ENCODE measurements at regions of chr15 and their contacts with region 1.

Region 1: DNA sequence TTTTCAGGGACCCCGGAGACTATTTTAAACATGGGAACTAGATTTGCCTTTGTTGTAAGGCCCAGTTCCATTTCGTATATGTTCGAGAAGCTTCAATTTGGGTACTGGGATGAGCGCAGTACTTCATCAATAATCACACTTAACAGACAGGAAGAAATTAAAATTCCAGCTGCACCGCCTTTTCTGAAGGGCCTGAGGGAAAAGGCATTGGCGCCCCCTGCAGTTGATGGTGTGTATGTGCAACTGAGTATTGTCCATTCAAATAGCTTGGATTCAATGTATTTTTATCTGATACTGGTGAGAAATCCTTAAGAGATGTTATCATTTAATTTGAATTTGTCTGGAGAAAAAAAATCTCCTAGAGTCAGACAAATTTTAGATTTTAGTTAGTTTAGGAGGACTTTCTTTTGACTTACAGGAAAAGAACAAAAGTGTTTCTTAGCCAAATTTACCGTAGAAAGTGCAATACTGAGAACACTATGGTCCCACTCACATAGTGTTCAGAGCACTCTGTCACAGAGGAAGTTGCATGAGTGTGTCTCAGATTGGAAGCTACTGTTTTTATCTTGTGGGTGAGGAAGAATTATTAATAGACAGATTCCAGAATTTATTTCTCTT is 5.4 kb upstream of the ALDH1A2 start:
- DNase-seq: no peak
- H3K4me3 ChIP-seq: no peak overlapping the region
- H3K27me3 ChIP-seq: peaks cover 2% of the 10 kb centered on the region
- CTCF ChIP-seq: peak; percentile 91

Region 2: DNA sequence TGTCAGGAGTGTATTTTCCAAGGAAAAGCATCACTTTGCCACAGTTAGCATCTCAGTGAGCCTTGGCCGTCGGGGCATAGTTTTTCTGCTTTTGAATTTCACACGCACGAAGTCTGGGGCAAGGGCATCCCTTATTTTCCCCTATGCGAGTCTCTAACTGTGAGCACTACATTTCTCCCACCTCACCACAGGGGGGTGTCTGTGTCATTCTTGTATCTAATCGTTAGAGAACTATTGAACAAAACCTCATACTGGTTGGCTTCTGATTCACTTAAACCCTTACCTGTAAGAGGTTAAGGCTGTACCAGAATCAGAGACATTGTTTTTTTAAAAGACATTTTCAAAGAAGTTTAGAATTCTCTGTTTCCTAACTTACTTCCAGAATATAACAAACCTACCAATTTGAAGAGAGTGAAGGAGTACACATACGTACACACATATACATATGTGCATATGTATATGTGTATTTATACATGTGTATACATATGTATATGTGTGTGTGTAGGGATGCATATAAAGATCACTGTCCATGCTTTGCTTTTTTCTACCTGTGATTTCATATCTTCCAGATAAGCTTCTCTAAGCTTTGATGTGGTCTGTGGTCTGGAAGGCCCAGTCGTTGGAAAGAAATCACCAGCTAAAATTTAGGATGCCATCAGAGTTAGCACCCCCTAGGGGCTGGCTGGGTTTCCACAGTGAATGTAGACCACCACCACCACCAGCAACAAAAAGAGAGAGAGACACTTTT is 429.8 kb before region 1 on chr15:
- CTCF ChIA-PET with region 1: interaction called, 11 read pairs
- POLR2A ChIA-PET with region 1: no interaction called
- DNase-seq: no peak
- H3K4me3 ChIP-seq: no peak overlapping the region
- H3K27me3 ChIP-seq: no peaks in the 10 kb centered on the region
- CTCF ChIP-seq: peak; percentile 67

Region 3: GRCh38 chr15:57732526-57733331 is 338.2 kb before region 1 on chr15:
- CTCF ChIA-PET with region 1: interaction called, 22 read pairs
- POLR2A ChIA-PET with region 1: no interaction called
- DNase-seq: no peak
- H3K4me3 ChIP-seq: no peak overlapping the region
- H3K27me3 ChIP-seq: no peaks in the 10 kb centered on the region
- CTCF ChIP-seq: peak; percentile 81

Region 4: GRCh38 chr15:57861036-57861638 is 209.8 kb before region 1 on chr15:
- CTCF ChIA-PET with region 1: interaction called, 32 read pairs
- POLR2A ChIA-PET with region 1: no interaction called
- DNase-seq: no peak
- H3K4me3 ChIP-seq: no peak overlapping the region
- H3K27me3 ChIP-seq: no peaks in the 10 kb centered on the region
- CTCF ChIP-seq: peak; percentile 70

Region 5: GRCh38 chr15:57873564-57874209 is 197.2 kb before region 1 on chr15:
- CTCF ChIA-PET with region 1: interaction called, 13 read pairs
- POLR2A ChIA-PET with region 1: no interaction called
- DNase-seq: peak; percentile 27
- H3K4me3 ChIP-seq: no peak overlapping the region
- H3K27me3 ChIP-seq: no peaks in the 10 kb centered on the region
- CTCF ChIP-seq: no peak

Region 6: GRCh38 chr15:58043192-58043903 is 27.6 kb before region 1 on chr15:
- CTCF ChIA-PET with region 1: interaction called, 10 read pairs
- POLR2A ChIA-PET with region 1: no interaction called
- DNase-seq: no peak
- H3K4me3 ChIP-seq: no peak overlapping the region
- H3K27me3 ChIP-seq: no peaks in the 10 kb centered on the region; the same call in 1 of the 2 replicates
- CTCF ChIP-seq: peak; percentile 77

Region 7: GRCh38 chr15:58182460-58183163 is 111.7 kb after region 1 on chr15:
- CTCF ChIA-PET with region 1: interaction called, 17 read pairs
- POLR2A ChIA-PET with region 1: no interaction called
- DNase-seq: no peak
- H3K4me3 ChIP-seq: no peak overlapping the region
- H3K27me3 ChIP-seq: peaks cover 2% of the 10 kb centered on the region; the same call in 1 of the 2 replicates
- CTCF ChIP-seq: peak; percentile 94

Region 8: DNA sequence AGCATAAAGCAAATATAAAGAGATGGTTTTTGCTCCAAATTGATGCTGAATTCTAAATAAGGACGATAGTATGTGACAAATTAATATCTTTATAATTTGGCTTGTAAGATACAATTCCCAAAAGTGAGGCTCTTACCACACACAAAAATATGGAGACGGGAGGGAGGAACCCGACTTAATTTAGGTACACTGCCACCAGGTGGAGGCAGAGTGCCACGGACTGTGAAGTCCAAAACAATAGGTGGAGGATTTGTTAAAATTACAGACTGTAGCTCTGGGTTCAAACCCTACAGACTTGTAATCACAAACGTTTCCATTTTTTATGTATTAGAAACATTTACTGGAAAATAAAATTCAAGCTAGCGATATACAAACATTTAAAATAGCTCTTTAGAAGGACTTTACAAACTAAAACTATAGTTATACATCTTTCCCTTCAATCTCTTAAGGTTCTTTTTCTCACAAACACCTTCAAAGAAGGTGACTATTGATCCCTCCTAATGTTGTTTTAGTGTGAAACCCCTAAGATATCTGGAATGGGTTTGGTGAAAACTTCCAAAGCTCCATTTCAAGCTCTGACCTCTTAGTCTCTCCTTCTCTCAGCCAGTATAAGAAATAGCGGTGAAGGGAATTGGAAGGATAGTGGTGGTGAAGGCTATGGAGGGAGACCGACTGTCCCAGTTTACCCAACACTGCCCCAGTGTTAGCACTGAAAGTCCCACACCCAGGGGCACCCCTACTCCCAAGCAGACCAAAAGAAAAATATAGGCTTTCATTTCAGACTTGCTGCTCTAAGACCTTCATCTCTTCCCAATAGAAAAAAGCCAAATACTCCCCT is 157.0 kb after region 1 on chr15:
- CTCF ChIA-PET with region 1: no interaction called
- POLR2A ChIA-PET with region 1: no interaction called
- DNase-seq: no peak
- H3K4me3 ChIP-seq: no peak overlapping the region
- H3K27me3 ChIP-seq: peaks cover 7% of the 10 kb centered on the region
- CTCF ChIP-seq: peak; percentile 77